ENCODE measurements at regions of chr9 and their contacts with region 1.

Region 1: GRCh38 chr9:33466565-33467495 is 6.9 kb downstream of the NOL6 start:
- DNase-seq: peak; percentile 67 to 84
- H3K4me3 ChIP-seq: no peak overlapping the region
- H3K4me3 Mint-ChIP-seq: no peak overlapping the region
- H3K27ac Mint-ChIP-seq: no peak overlapping the region
- H3K4me1 ChIP-seq: peaks cover under 1% of the 10 kb centered on the region; the same call in 1 of the 2 replicates
- H3K4me1 Mint-ChIP-seq: peaks cover 7% of the 10 kb centered on the region
- H3K27me3 ChIP-seq: no peaks in the 10 kb centered on the region
- H3K27me3 Mint-ChIP-seq: no peaks in the 10 kb centered on the region
- CTCF ChIP-seq: peak; percentile 96 to 97

Region 2: GRCh38 chr9:33170464-33171415 is 296.1 kb before region 1 on chr9:
- CTCF ChIA-PET with region 1: no interaction called
- POLR2A ChIA-PET with region 1: no interaction called
- intact Hi-C with region 1: no loop called
- DNase-seq: peak in 1 of 2 experiments; percentile 36
- H3K4me3 ChIP-seq: no peak overlapping the region
- H3K4me3 Mint-ChIP-seq: no peak overlapping the region
- H3K27ac Mint-ChIP-seq: peak overlapping the region; percentile 95
- H3K4me1 ChIP-seq: peaks cover 45% of the 10 kb centered on the region
- H3K4me1 Mint-ChIP-seq: peaks cover 49% of the 10 kb centered on the region
- H3K27me3 ChIP-seq: no peaks in the 10 kb centered on the region
- H3K27me3 Mint-ChIP-seq: no peaks in the 10 kb centered on the region
- CTCF ChIP-seq: peak in 1 of 2 experiments; percentile 37

Region 3: DNA sequence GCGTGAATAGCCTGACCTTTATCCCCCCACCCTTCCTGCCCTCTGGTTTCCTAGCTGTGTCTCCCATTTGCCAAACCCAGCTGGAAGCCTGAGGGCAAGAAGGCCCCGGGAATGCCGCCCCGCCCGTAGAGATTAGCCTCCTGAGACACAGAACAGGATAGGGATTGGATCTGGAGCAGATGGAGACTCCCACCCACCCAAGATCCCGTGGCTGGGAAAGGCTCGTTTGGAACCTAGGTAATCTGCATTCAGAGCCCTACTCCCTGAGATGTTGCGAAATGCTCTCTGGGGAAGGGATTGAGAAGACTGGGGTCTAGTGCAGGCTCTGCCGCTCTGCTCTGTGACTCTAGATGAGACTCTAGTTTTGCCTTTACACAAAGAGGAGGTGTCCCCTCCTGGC is 30.4 kb before region 1 on chr9:
- CTCF ChIA-PET with region 1: no interaction called
- POLR2A ChIA-PET with region 1: no interaction called
- intact Hi-C with region 1: no loop called
- DNase-seq: peak; percentile 49 to 80
- H3K4me3 ChIP-seq: no peak overlapping the region
- H3K4me3 Mint-ChIP-seq: no peak overlapping the region
- H3K27ac Mint-ChIP-seq: peak overlapping the region; percentile 34
- H3K4me1 ChIP-seq: peaks cover 59% of the 10 kb centered on the region
- H3K4me1 Mint-ChIP-seq: peaks cover 54% of the 10 kb centered on the region
- H3K27me3 ChIP-seq: no peaks in the 10 kb centered on the region
- H3K27me3 Mint-ChIP-seq: no peaks in the 10 kb centered on the region
- CTCF ChIP-seq: no peak

Region 4: DNA sequence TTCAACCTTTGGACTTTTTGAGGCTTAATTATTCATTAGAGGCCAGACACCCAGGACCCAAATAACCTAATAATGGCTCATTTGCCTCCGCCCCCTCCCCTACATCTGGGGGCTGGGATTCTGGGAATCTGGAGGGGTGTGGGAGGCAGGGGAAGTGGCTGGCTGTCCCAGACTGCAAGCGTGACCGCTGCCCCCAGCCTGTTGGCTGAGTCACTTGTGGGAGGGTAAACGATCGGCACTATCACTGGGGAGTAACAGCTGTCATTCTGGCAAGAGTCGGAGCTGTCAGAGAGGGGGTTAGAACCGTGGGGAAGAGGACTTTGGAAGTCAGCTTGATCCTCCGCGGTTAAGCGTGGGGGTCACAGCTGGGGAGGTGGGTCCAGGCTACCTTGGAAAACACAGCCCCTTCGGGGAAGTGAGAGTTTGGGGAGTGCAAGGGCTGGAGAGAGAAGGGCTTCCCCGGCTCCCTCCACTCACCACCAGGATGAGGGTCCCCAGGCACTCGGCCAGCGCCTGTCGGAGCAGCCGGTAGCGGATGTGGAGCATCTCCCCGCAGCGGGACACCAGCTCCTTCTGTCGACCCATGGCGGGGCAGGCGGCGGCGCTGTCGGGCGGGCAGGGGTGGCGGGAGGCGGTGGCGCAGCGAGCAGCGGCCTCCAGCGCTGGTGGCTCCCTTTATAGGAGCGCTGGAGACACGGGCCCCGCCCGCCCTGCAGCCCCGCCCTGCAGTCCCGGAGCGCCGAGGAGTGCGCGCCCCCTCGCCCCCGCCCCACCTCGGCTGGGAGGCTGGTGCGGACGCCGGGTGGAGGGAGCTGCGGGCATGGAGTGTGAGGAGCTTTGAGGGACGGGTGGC is 19.7 kb before region 1 on chr9 and contains the start of gene AQP3:
- CTCF ChIA-PET with region 1: interaction called, 22 read pairs
- POLR2A ChIA-PET with region 1: no interaction called
- intact Hi-C with region 1: no loop called
- DNase-seq: peak; percentile 82 to 85
- H3K4me3 ChIP-seq: peak within 1 kb of the TSS; percentile 62
- H3K4me3 Mint-ChIP-seq: peak within 1 kb of the TSS; percentile 77
- H3K27ac Mint-ChIP-seq: peak within 1 kb of the TSS; percentile 62
- H3K4me1 ChIP-seq: peaks cover 49% of the 10 kb centered on the region
- H3K4me1 Mint-ChIP-seq: peaks cover 30% of the 10 kb centered on the region
- H3K27me3 ChIP-seq: no peaks in the 10 kb centered on the region
- H3K27me3 Mint-ChIP-seq: no peaks in the 10 kb centered on the region
- CTCF ChIP-seq: peak; percentile 33
- total RNA-seq, gene AQP3: 24.1 and 24.8 TPM in 2 replicates

Region 5: DNA sequence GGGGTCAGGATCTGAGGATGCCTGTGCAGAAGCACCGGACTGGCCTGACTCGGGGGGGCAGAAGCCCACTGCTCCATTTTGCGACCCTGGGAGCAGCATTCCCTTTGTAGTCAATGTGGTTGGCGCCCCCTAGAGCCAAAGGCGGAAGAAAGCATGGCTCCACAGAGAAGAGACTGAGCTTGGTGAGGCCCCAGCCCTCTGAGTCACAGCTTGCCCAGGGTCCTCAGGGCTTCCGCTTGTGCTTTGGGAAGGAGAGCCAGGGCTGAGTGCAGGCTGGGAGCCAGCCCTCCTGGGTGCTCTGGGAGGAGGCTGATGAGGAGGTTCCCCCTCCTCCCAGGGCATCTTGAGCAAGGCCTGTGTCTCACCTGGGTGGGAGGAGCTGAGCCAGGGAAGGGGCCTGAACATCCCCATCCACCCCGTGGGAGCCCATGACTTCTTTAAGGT is 14.0 kb before region 1 on chr9:
- CTCF ChIA-PET with region 1: interaction called, 22 read pairs
- POLR2A ChIA-PET with region 1: interaction called, 3 read pairs
- intact Hi-C with region 1: no loop called
- DNase-seq: peak; percentile 71 to 73
- H3K4me3 ChIP-seq: no peak overlapping the region
- H3K4me3 Mint-ChIP-seq: no peak overlapping the region
- H3K27ac Mint-ChIP-seq: no peak overlapping the region
- H3K4me1 ChIP-seq: peaks cover 24% of the 10 kb centered on the region
- H3K4me1 Mint-ChIP-seq: peaks cover 8% of the 10 kb centered on the region
- H3K27me3 ChIP-seq: no peaks in the 10 kb centered on the region
- H3K27me3 Mint-ChIP-seq: no peaks in the 10 kb centered on the region
- CTCF ChIP-seq: peak; percentile 62 to 70